Heart left ventricle (tissue), 16 donors: ENCODE measurements at regions of chr2 and their contacts with region 1.

Region 1: GRCh38 chr2:183078465-183079138 is at the start of gene DUSP19:
- DNase-seq: peak; percentile 73 to 90 (median 84)
- ATAC-seq: peak; percentile 90 to 95 (median 93)
- H3K4me3 ChIP-seq: peak within 1 kb of the TSS; percentile 33 to 87 (median 70)
- H3K27ac ChIP-seq: peak within 1 kb of the TSS; percentile 64 to 95 (median 88)
- H3K4me1 ChIP-seq: peaks cover 0 to 29% (median 9%) of the 10 kb centered on the region in 12 donors
- H3K27me3 ChIP-seq: peaks cover 0 to 13% (median 0%) of the 10 kb centered on the region in 9 donors
- CTCF ChIP-seq: no peak
- POLR2A ChIP-seq: peak in 1 of 2 donors; percentile 88
- total RNA-seq, gene DUSP19: 4.2 to 13.4 (median 9.3) TPM

Region 2: GRCh38 chr2:182694189-182694588 is 384.4 kb before region 1 on chr2:
- intact Hi-C with region 1: no loop called
- DNase-seq: no peak
- ATAC-seq: no peak
- H3K4me3 ChIP-seq: no peak overlapping the region
- H3K27ac ChIP-seq: no peak overlapping the region
- H3K4me1 ChIP-seq: no peaks in the 10 kb centered on the region
- H3K27me3 ChIP-seq: no peaks in the 10 kb centered on the region
- CTCF ChIP-seq: no peak
- POLR2A ChIP-seq: no peak

Region 3: DNA sequence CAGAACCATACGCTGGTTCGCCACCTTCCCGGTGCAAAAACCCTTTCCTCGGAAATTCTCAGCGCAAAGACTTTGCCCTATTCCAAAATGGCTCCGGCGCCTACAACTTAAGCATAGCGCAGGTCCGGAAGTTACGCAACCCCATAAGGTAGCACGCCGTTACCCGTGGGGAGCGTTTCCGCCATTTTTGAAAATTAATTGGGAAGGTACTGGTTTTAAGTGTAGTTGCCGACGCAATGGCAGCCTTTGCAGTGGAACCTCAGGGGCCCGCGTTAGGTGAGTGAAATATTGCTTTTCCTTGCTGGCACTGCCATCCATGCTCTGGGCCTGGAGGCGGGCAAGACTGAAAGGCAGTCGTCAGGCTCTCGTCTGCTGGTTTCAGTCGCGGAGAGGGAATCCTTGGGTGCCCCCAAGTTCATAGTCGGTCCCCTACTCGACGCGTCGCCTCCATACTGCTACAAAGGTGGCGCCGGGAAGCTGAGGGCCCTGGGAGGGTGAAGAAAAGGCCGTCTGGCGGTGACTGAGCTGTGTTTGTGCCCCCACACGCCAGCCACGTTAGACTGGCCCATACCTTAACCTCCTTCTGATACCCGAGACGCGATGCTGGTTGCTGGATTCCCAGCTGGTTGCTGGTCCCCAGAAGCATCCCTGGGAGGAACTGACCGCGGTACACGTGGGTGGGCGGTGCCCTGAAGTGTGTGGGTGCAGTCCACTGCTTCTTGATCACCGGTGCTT is 45.8 kb after region 1 on chr2 and contains the start of gene NUP35:
- intact Hi-C with region 1: loop called in 7 of 10 experiments (anchors 1 to 5 kb)
- DNase-seq: peak; percentile 81 to 86 (median 83)
- ATAC-seq: peak; percentile 97 to 99 (median 98)
- H3K4me3 ChIP-seq: peak within 1 kb of the TSS; percentile 67 to 91 (median 77)
- H3K27ac ChIP-seq: peak within 1 kb of the TSS; percentile 11 to 88 (median 78)
- H3K4me1 ChIP-seq: peaks cover 0 to 25% (median 11%) of the 10 kb centered on the region in 12 donors
- H3K27me3 ChIP-seq: no peaks in the 10 kb centered on the region
- CTCF ChIP-seq: no peak
- POLR2A ChIP-seq: no peak
- total RNA-seq, gene NUP35: 6.2 to 10.4 (median 8.0) TPM